ENCODE measurements at regions of chr15 and their contacts with region 1.

Region 1: GRCh38 chr15:48645558-48646330 is at the start of gene FBN1:
- DNase-seq: peak; percentile 61
- H3K4me3 ChIP-seq: peak within 1 kb of the TSS; percentile 69 to 80 (median 73)
- H3K27ac ChIP-seq: no peak within 1 kb of the TSS
- H3K4me1 ChIP-seq: peaks cover 17% of the 10 kb centered on the region
- H3K27me3 ChIP-seq: peaks cover 1% of the 10 kb centered on the region
- CTCF ChIP-seq: no peak
- total RNA-seq, gene FBN1: 14.0 to 26.7 TPM

Region 2: DNA sequence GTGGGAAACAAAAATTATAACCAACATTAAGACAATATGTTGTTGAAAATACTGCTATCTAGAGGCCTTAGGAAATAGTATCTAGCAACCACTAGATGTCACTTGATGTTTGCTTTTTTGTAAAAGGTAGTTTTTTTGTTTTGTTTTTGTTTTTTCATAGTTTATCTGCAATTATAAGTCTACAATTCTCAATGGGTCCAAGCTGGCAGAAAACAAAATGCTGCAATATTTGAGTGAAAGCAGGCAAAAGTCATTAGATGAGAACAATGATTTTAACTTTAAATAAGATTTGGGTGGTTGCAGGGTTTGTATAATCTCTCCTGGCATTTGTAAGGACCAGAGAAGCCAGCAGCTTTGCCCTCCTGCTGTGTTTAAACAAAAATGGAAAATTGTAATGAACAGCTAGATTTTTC is 287.5 kb before region 1 on chr15:
- CTCF ChIA-PET with region 1: interaction called, 5 read pairs
- dilution Hi-C with region 1: no loop called
- in situ Hi-C with region 1: loop called (anchors 10 to 25 kb)
- intact Hi-C with region 1: loop called (anchors 1 kb)
- DNase-seq: no peak
- H3K4me3 ChIP-seq: no peak overlapping the region
- H3K27ac ChIP-seq: no peak overlapping the region
- H3K4me1 ChIP-seq: peaks cover 9% of the 10 kb centered on the region
- H3K27me3 ChIP-seq: no peaks in the 10 kb centered on the region
- CTCF ChIP-seq: peak; percentile 49 to 62

Region 3: DNA sequence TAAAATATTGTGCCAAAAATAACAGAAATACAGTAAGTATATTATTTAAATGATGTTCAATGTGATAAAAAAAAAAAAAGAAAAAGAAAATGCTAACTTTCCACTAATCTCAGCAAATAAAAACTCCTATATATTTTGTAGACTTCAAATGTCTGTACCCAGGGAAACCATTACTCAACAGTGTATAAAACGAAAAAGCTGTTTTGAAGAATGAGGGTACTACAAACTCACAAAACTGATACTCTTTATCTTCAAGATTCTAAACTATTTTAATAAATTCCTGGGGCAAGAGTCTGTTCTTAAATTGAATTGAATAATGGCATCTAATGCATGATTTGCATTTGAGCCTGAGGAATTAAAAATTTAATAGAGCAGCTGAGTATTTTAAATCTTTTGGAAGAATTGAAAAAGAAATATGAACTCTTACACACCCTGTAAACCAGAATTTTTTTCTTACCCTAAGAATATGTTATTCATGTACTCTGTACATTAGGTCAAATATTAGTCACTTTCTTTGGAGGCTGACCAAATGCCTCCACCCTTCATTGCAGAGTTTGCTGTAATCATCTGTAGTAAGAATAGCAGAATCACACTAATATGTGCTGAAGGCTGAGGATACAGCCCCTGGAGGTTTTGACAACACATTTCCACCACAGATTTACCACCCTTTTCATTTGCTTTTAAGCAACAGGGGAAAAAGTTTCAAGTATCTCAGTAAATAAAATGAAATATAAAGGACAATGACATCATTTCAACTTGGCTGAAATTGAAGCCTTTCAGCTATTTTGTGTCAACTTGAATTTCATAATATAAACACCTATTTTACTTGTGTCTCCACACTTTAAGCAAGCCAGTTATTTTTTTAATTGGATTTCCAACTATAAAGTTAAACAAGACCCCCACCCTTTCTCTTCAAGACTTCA is 79.9 kb before region 1 on chr15:
- CTCF ChIA-PET with region 1: no interaction called
- dilution Hi-C with region 1: no loop called
- in situ Hi-C with region 1: no loop called
- intact Hi-C with region 1: loop called (anchors 5 kb)
- DNase-seq: peak; percentile 79
- H3K4me3 ChIP-seq: no peak overlapping the region
- H3K27ac ChIP-seq: peak overlapping the region; percentile 54
- H3K4me1 ChIP-seq: peaks cover 23% of the 10 kb centered on the region
- H3K27me3 ChIP-seq: no peaks in the 10 kb centered on the region
- CTCF ChIP-seq: no peak

Region 4: GRCh38 chr15:48695088-48695826 is 49.5 kb after region 1 on chr15:
- CTCF ChIA-PET with region 1: no interaction called
- dilution Hi-C with region 1: no loop called
- in situ Hi-C with region 1: no loop called
- intact Hi-C with region 1: loop called (anchors 5 kb)
- DNase-seq: peak; percentile 81
- H3K4me3 ChIP-seq: no peak overlapping the region
- H3K27ac ChIP-seq: peak overlapping the region; percentile 36
- H3K4me1 ChIP-seq: peaks cover 30% of the 10 kb centered on the region
- H3K27me3 ChIP-seq: no peaks in the 10 kb centered on the region
- CTCF ChIP-seq: no peak

Region 5: GRCh38 chr15:48855501-48856440 is 210.0 kb after region 1 on chr15:
- CTCF ChIA-PET with region 1: no interaction called
- dilution Hi-C with region 1: no loop called
- in situ Hi-C with region 1: no loop called
- intact Hi-C with region 1: loop called (anchors 2 kb)
- DNase-seq: no peak
- H3K4me3 ChIP-seq: no peak overlapping the region
- H3K27ac ChIP-seq: no peak overlapping the region
- H3K4me1 ChIP-seq: peaks cover 5% of the 10 kb centered on the region
- H3K27me3 ChIP-seq: no peaks in the 10 kb centered on the region
- CTCF ChIP-seq: peak; percentile 47 to 70

Region 6: DNA sequence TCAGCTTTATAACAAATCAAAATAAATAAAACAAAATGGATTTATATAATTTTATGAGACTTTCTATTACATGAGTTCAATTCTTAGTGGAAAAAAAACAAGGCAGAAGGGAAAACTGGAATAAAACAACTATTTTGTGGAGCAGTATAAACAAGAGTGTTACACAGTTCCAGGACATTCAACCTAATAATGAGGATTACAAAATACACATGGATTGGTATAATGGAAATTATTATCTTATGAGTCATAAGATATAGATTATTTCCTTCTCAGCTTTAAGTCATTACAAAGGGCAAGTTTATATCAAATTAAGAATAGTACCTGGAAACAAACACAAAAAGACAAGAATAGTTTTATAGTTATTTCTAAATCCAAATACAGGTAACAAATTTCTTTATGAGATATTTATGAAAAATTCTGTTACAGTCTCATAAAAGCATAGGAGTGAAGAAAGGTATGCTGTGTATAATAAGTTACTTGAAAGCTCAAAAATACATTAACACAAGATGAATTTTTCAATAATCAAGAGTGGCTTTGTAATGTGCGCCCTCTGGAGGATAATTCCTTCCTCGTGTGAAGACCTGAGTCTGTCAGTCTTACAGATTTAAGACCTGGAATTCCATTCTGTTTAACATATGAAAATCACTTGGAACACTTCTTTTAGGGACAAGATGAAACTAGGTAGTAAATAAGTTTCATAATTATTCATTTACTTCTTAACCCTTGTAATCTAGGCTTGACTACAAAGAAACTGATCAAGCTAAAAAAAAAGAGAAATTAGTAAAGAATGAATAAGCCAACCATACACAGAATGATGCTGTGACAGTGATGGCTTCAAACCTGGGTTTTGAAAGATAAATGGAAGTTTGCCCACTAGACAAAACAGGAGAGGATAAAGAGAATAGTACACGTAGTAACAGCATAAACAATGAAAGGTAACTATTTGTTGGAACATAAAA is 500.2 kb after region 1 on chr15:
- CTCF ChIA-PET with region 1: no interaction called
- dilution Hi-C with region 1: no loop called
- in situ Hi-C with region 1: no loop called
- intact Hi-C with region 1: no loop called
- DNase-seq: peak; percentile 52
- H3K4me3 ChIP-seq: peak overlapping the region in 1 of 3 experiments; percentile 17
- H3K27ac ChIP-seq: peak overlapping the region; percentile 15
- H3K4me1 ChIP-seq: no peaks in the 10 kb centered on the region
- H3K27me3 ChIP-seq: no peaks in the 10 kb centered on the region
- CTCF ChIP-seq: peak; percentile 69 to 79